Esophagus squamous epithelium (tissue), 5 donors: ENCODE measurements at regions of chr12 and their contacts with region 1.

Region 1: GRCh38 chr12:98698603-98699463 is 53.7 kb downstream of the APAF1 start:
- DNase-seq: no peak
- H3K4me3 ChIP-seq: no peak overlapping the region
- H3K27ac ChIP-seq: peak overlapping the region in 1 of 4 donors; percentile 21
- H3K4me1 ChIP-seq: peaks cover 0 to 5% (median 0%) of the 10 kb centered on the region in 3 donors
- H3K27me3 ChIP-seq: no peaks in the 10 kb centered on the region
- CTCF ChIP-seq: peak in 5 of 6 experiments; percentile 26 to 64 (median 31)
- POLR2A ChIP-seq: no peak

Region 2: DNA sequence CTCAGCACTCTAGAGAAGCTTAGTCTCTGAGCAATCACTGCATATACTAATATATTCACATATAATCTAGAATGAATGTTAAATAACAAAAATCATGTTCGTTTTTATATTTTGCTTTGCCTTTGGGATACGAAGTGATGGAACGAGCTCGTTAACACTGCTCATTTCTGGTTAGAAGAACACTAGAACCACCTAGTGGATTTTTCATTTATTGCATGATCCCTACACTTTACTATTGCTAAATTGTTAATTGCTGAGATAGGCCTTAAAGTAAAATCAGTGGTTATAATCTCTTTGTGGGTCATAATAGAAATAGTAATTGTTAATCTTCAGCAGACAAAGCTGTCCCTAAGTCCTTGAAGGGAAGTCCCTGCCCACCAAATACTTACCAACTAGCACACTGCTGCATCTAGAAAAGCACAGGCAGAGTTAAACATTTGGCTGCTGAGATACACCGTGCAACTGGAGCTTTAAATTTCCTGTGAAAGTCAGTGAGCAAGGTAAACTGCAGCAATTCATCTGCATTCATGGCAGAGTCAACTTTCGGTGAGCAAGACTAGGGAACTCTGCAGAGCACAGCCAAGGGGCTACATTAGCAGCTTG is 300.0 kb after region 1 on chr12:
- intact Hi-C with region 1: loop called (anchors 5 kb)
- DNase-seq: no peak
- H3K4me3 ChIP-seq: no peak overlapping the region
- H3K27ac ChIP-seq: no peak overlapping the region
- H3K4me1 ChIP-seq: no peaks in the 10 kb centered on the region
- H3K27me3 ChIP-seq: no peaks in the 10 kb centered on the region
- CTCF ChIP-seq: peak in 5 of 6 experiments; percentile 29 to 76 (median 62)
- POLR2A ChIP-seq: no peak